Dendritic cell treated with granulocyte-macrophage colony-stimulating factor and Interleukin-4, amounts not matched to agents 40 ng/mL and 50 ng/mL, for 4 days (primary cell): ENCODE measurements at regions of chr6 and their contacts with region 1.

Region 1: GRCh38 chr6:45445749-45446549 is 68.2 kb upstream of the SUPT3H start:
- H3K4me3 Mint-ChIP-seq: peak overlapping the region; percentile 34
- H3K27ac Mint-ChIP-seq: peak overlapping the region; percentile 85
- H3K4me1 Mint-ChIP-seq: peaks cover 65% of the 10 kb centered on the region
- H3K27me3 Mint-ChIP-seq: no peaks in the 10 kb centered on the region

Region 2: DNA sequence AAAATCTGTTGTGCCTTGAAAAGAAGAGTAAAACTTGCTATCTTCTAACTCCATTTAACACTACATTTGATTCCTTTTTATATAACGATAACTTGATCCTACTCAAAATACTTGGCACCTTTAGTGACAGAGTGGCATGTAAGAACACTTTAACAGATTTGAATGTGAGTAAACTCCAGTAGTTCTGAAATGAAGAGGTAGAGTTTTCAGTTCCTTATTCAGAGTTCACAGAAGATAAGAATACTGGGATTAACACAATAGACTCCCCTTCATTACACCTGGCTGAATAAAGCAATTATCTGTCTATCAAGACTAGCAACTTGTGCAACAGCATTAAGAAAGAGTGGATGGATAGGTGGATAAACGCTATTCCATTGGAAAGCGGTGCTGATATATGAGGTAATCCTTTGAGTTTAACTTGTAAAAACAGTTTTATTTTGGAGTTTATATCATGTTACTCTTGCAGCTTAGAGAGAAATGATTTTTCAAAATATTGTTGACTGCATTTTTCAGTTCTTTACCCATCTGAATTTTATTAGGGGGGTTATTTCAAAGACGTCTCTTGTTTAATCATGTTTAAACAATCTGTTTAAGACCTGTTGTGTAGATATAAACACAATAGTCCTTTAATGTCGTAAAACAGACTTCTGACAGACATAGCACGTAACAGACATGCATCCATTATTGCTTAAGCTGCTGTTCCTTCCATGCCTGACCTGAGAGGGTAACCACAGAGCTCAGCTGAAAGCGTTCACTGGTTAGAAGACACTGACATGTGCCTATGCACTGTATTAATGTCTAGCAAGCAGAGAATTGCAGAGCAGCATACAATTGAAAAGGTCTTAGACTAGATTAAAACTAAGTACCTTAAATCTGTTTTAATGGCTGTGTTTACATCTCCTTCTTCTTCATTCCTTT is 34.1 kb after region 1 on chr6:
- intact Hi-C with region 1: loop called (anchors 5 kb)
- H3K4me3 Mint-ChIP-seq: no peak overlapping the region
- H3K27ac Mint-ChIP-seq: peak overlapping the region; percentile 39
- H3K4me1 Mint-ChIP-seq: peaks cover 29% of the 10 kb centered on the region
- H3K27me3 Mint-ChIP-seq: no peaks in the 10 kb centered on the region